ENCODE measurements at regions of chrX and their contacts with region 1.

Region 1: DNA sequence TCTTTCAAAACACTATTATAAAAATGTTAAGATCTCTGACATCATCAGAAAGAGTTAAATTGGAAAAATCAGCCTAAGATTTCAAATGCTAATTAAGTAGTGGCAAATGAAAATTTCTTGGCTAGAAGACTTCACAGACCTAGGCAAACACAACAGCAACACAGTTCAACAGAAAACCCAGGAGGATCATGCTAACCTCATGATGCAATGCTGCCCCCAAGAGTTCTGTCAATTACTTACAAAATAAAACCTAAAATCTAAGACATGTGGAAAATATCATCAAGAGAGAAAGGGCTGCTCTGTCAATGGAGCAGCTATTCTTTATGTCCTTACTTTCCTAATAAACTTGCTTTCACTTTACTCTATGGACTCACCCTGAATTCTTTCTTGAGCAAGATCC is 21.0 kb downstream of the S100G start:
- DNase-seq: no peak
- ATAC-seq: no peak
- H3K4me3 ChIP-seq: no peak overlapping the region
- H3K27ac ChIP-seq: no peak overlapping the region
- H3K4me1 ChIP-seq: no peaks in the 10 kb centered on the region
- H3K27me3 ChIP-seq: peaks cover 0 to 9% (median 0%) of the 10 kb centered on the region in 9 donors
- CTCF ChIP-seq: peak in 10 of 12 donors; percentile 16 to 47 (median 34)
- POLR2A ChIP-seq: no peak

Region 2: DNA sequence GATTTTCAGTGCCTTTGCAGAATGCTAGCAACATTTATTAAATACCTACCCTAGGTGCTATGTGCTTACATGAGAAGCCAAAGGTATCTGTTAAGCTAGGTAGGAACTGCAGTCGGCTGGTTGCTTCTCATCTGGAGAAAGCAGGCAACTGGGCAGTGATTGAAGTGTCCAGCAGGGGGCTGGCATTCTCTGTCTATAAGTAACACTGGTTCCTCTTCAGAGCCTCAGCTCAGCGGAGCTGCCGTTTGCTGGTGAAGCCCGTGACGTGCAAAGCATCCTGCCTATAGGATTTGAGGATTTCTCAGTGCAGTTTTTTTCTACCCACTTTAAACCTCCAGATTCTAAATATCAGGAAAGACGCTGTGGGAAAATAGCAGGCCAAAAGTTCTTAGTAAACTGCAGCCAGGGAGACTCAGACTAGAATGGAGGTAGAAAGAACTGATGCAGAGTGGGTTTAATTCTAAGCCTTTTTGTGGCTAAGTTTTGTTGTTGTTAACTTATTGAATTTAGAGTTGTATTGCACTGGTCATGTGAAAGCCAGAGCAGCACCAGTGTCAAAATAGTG is 547.7 kb before region 1 on chrX and contains the start of gene GRPR:
- intact Hi-C with region 1: loop called in 7 of 10 experiments (anchors 5 to 10 kb)
- DNase-seq: peak; percentile 54 to 84 (median 70)
- ATAC-seq: peak; percentile 75 to 94 (median 90)
- H3K4me3 ChIP-seq: no peak within 1 kb of the TSS
- H3K27ac ChIP-seq: no peak within 1 kb of the TSS
- H3K4me1 ChIP-seq: no peaks in the 10 kb centered on the region
- H3K27me3 ChIP-seq: peaks cover 0 to 43% (median 0%) of the 10 kb centered on the region in 9 donors
- CTCF ChIP-seq: peak; percentile 42 to 76 (median 64)
- POLR2A ChIP-seq: no peak
- total RNA-seq, gene GRPR: 0.16 to 0.58 (median 0.29) TPM

Region 3: GRCh38 chrX:16282193-16282592 is 388.8 kb before region 1 on chrX:
- intact Hi-C with region 1: loop called in 1 of 10 experiments (anchors 10 kb)
- DNase-seq: peak in 1 of 5 donors; percentile 5
- ATAC-seq: peak; percentile 67 to 82 (median 76)
- H3K4me3 ChIP-seq: no peak overlapping the region
- H3K27ac ChIP-seq: no peak overlapping the region
- H3K4me1 ChIP-seq: no peaks in the 10 kb centered on the region
- H3K27me3 ChIP-seq: peaks cover 0 to 15% (median 0%) of the 10 kb centered on the region in 9 donors
- CTCF ChIP-seq: peak in 1 of 12 donors; percentile 13
- POLR2A ChIP-seq: no peak

Region 4: DNA sequence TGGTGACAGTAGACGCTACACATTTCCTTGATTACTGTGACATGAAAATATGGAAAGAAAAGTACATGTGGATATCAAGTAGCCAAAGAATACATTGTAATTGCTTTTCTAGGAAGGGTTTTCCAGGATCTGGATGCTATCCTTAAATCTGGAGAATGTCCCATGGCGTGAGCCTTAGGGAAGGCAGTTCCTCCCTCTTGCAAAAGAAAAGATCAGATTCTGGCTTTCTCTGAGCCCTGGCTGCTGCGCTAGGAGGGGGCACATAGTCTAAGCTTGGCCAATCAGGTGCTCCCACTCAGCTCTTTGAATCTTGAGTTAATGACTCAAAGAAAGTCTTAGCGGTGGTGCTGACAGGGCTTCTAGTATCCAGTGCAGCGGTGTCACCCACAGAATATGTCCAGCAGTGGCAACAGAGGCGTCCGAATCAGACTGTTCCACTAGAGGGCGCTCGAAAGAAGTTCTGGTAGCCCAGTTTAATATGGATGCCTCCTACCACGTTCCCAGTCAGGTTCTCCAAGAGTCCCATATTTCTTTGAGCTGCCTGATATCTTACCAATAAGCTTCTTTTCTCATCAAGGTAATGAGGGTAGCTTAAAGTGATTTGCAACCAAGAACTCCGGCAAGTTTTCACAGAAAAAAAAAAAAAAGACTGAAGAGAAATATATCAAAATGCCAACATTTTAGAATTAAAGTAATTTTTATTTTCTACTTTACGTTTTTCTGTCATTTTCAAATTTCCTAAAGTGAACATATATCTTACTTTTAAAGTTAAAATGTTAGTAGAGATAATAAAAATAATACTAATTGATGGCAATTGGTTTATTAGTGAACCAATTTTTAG is 234.4 kb before region 1 on chrX:
- intact Hi-C with region 1: loop called in 8 of 10 experiments (anchors 5 to 10 kb)
- DNase-seq: peak; percentile 59 to 70 (median 64)
- ATAC-seq: peak in 3 of 4 donors; percentile 84 to 95 (median 90)
- H3K4me3 ChIP-seq: no peak overlapping the region
- H3K27ac ChIP-seq: no peak overlapping the region
- H3K4me1 ChIP-seq: no peaks in the 10 kb centered on the region
- H3K27me3 ChIP-seq: peaks cover 0 to 20% (median 0%) of the 10 kb centered on the region in 9 donors
- CTCF ChIP-seq: peak; percentile 35 to 69 (median 54)
- POLR2A ChIP-seq: no peak

Region 5: GRCh38 chrX:16451334-16451733 is 219.7 kb before region 1 on chrX:
- intact Hi-C with region 1: no loop called
- DNase-seq: no peak
- ATAC-seq: no peak
- H3K4me3 ChIP-seq: no peak overlapping the region
- H3K27ac ChIP-seq: no peak overlapping the region
- H3K4me1 ChIP-seq: no peaks in the 10 kb centered on the region
- H3K27me3 ChIP-seq: peaks cover 0 to 10% (median 0%) of the 10 kb centered on the region in 9 donors
- CTCF ChIP-seq: no peak
- POLR2A ChIP-seq: no peak

Region 6: DNA sequence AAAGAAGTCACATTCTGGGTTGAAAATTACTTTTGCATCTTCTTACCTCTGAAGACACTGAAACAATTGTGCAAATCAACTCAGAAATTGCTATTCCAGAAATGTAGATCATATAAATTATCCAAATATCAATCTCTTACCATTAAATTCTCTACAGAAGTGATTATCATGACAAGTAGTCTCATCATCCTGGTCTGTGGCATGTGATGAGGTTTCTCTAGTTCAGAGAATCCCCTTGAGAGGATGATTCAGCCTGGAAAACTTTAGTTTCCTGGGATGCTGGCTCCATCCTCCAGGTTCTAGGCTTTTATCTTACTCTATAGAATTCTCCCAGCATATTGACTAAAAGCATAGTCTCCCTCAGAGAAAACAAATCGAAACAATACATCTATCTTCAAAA is 97.2 kb before region 1 on chrX:
- intact Hi-C with region 1: no loop called
- DNase-seq: no peak
- ATAC-seq: no peak
- H3K4me3 ChIP-seq: no peak overlapping the region
- H3K27ac ChIP-seq: no peak overlapping the region
- H3K4me1 ChIP-seq: no peaks in the 10 kb centered on the region
- H3K27me3 ChIP-seq: peaks cover 0 to 3% (median 0%) of the 10 kb centered on the region in 9 donors
- CTCF ChIP-seq: no peak
- POLR2A ChIP-seq: no peak

Region 7: GRCh38 chrX:16739581-16739980 is 68.6 kb after region 1 on chrX:
- intact Hi-C with region 1: no loop called
- DNase-seq: no peak
- ATAC-seq: no peak
- H3K4me3 ChIP-seq: no peak overlapping the region
- H3K27ac ChIP-seq: no peak overlapping the region
- H3K4me1 ChIP-seq: no peaks in the 10 kb centered on the region
- H3K27me3 ChIP-seq: no peaks in the 10 kb centered on the region
- CTCF ChIP-seq: no peak
- POLR2A ChIP-seq: no peak

Region 8: GRCh38 chrX:17120816-17121215 is 449.8 kb after region 1 on chrX:
- intact Hi-C with region 1: no loop called
- DNase-seq: no peak
- ATAC-seq: no peak
- H3K4me3 ChIP-seq: no peak overlapping the region
- H3K27ac ChIP-seq: no peak overlapping the region
- H3K4me1 ChIP-seq: no peaks in the 10 kb centered on the region
- H3K27me3 ChIP-seq: peaks cover 0 to 3% (median 0%) of the 10 kb centered on the region in 9 donors
- CTCF ChIP-seq: no peak
- POLR2A ChIP-seq: no peak